ENCODE measurements at regions of chr2 and their contacts with region 1.

Region 1: GRCh38 chr2:112941753-112942658 is 31.0 kb downstream of the IL37 start:
- H3K4me3 Mint-ChIP-seq: no peak overlapping the region
- H3K27ac Mint-ChIP-seq: no peak overlapping the region
- H3K4me1 Mint-ChIP-seq: peaks cover 13% of the 10 kb centered on the region
- H3K27me3 Mint-ChIP-seq: peaks cover 5% of the 10 kb centered on the region

Region 2: GRCh38 chr2:112749755-112750559 is 192.0 kb before region 1 on chr2:
- intact Hi-C with region 1: loop called (anchors 1 kb)
- H3K4me3 Mint-ChIP-seq: no peak overlapping the region
- H3K27ac Mint-ChIP-seq: peak overlapping the region; percentile 23
- H3K4me1 Mint-ChIP-seq: peaks cover 17% of the 10 kb centered on the region
- H3K27me3 Mint-ChIP-seq: no peaks in the 10 kb centered on the region